AG04449 (cell line): ENCODE measurements at regions of chr2 and their contacts with region 1.

Region 1: GRCh38 chr2:46857893-46858701 is 57.5 kb downstream of the MCFD2 start:
- DNase-seq: peak; percentile 100
- H3K4me3 ChIP-seq: no peak overlapping the region
- CTCF ChIP-seq: peak; percentile 18

Region 2: GRCh38 chr2:46803911-46804670 is 54.0 kb before region 1 on chr2:
- CTCF ChIA-PET with region 1: interaction called, 3 read pairs
- POLR2A ChIA-PET with region 1: interaction called, 20 read pairs
- DNase-seq: peak; percentile 81
- H3K4me3 ChIP-seq: no peak overlapping the region
- CTCF ChIP-seq: no peak

Region 3: DNA sequence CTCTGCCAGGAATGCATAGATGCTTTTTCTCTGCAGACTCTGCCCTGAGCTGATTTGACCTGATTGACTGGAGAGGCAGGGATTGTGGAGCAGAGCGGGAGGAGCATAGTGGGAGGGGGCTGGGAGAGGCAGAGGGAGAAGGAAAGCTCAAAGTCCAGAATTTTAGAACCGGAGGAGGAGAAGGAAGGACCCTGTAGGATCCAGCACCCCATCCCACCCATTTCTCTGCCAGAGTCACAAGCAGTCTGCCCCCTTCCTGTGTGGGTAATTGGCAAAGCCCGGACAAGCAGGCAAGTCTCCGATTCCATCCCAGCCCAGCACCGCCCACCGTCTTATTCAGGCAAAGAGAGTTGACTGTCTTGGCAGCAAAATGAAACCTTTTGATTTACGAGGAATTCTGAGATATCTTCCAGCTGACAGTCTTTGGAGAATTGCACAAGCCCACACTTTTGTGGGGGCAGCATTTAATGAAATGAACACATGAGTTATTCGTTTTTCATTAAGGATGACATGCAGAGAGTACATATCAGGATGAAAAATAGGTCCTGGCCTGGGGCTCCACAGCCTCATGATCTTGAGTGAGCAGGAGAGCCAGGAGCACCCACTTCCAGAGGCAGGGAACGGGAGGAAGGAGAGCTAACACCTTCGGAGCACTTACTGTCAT is 45.6 kb before region 1 on chr2:
- CTCF ChIA-PET with region 1: interaction called, 4 read pairs
- POLR2A ChIA-PET with region 1: interaction called, 10 read pairs
- DNase-seq: peak; percentile 75
- H3K4me3 ChIP-seq: peak overlapping the region; percentile 4; the same call in 1 of the 2 replicates
- CTCF ChIP-seq: no peak

Region 4: GRCh38 chr2:46876741-46877384 is 18.8 kb after region 1 on chr2:
- CTCF ChIA-PET with region 1: interaction called, 42 read pairs
- POLR2A ChIA-PET with region 1: interaction called, 8 read pairs
- DNase-seq: no peak
- H3K4me3 ChIP-seq: no peak overlapping the region
- CTCF ChIP-seq: peak; percentile 19

Region 5: GRCh38 chr2:46887028-46887885 is 29.2 kb after region 1 on chr2:
- CTCF ChIA-PET with region 1: interaction called, 20 read pairs
- POLR2A ChIA-PET with region 1: interaction called, 4 read pairs
- DNase-seq: no peak
- H3K4me3 ChIP-seq: no peak overlapping the region
- CTCF ChIP-seq: no peak